Transverse colon (tissue), 4 donors: ENCODE measurements at regions of chr18 and their contacts with region 1.

Region 1: DNA sequence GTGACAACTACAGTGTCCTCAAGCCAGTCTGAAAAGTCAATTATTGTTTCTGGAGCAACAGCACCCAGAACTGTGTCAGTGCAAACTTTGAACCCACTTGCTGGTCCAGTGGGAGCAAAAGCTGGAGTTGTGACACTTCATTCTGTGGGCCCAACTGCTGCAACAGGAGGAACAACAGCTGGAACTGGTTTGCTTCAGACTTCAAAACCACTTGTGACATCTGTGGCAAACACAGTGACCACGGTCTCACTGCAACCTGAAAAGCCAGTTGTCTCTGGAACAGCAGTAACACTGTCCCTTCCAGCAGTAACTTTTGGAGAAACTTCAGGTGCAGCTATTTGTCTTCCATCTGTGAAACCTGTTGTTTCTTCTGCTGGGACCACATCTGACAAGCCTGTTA is 59.8 kb downstream of the TAF4B start:
- DNase-seq: no peak
- H3K4me3 ChIP-seq: no peak overlapping the region
- H3K27ac ChIP-seq: no peak overlapping the region
- H3K4me1 ChIP-seq: no peaks in the 10 kb centered on the region
- H3K27me3 ChIP-seq: no peaks in the 10 kb centered on the region
- CTCF ChIP-seq: no peak
- EP300 ChIP-seq: no peak
- POLR2A ChIP-seq: no peak

Region 2: GRCh38 chr18:26040051-26040656 is 245.9 kb before region 1 on chr18:
- in situ Hi-C with region 1: no loop called
- intact Hi-C with region 1: no loop called
- DNase-seq: no peak
- H3K4me3 ChIP-seq: no peak overlapping the region
- H3K27ac ChIP-seq: no peak overlapping the region
- H3K4me1 ChIP-seq: no peaks in the 10 kb centered on the region
- H3K27me3 ChIP-seq: no peaks in the 10 kb centered on the region
- CTCF ChIP-seq: no peak
- EP300 ChIP-seq: no peak
- POLR2A ChIP-seq: no peak

Region 3: DNA sequence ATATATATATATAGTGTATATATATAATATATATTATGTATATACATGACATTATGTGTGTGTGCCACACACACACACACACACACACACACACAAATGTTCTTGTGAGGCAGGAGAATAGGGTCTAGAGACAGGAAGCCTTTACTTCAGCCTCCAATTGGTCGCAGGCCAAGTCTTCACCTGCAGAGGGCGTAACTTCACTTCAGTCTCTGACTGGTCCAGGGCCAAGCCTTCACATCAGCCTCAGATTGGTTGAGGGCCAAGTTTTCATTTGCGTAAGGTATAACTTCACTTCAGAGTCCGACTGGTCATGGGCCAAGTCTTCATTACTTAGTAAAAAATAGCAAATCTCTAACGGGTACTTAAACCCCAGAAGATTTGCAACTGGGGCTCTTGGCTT is 182.4 kb before region 1 on chr18:
- in situ Hi-C with region 1: loop called in 1 of 4 experiments (anchors 25 kb)
- intact Hi-C with region 1: no loop called
- DNase-seq: peak; percentile 13
- H3K4me3 ChIP-seq: no peak overlapping the region
- H3K27ac ChIP-seq: no peak overlapping the region
- H3K4me1 ChIP-seq: no peaks in the 10 kb centered on the region
- H3K27me3 ChIP-seq: no peaks in the 10 kb centered on the region
- CTCF ChIP-seq: no peak
- EP300 ChIP-seq: no peak
- POLR2A ChIP-seq: no peak

Region 4: GRCh38 chr18:26190506-26190905 is 95.5 kb before region 1 on chr18:
- in situ Hi-C with region 1: no loop called
- intact Hi-C with region 1: no loop called
- DNase-seq: peak; percentile 43
- H3K4me3 ChIP-seq: no peak overlapping the region
- H3K27ac ChIP-seq: peak overlapping the region in 1 of 4 donors; percentile 18
- H3K4me1 ChIP-seq: no peaks in the 10 kb centered on the region
- H3K27me3 ChIP-seq: no peaks in the 10 kb centered on the region
- CTCF ChIP-seq: no peak
- EP300 ChIP-seq: no peak
- POLR2A ChIP-seq: no peak

Region 5: DNA sequence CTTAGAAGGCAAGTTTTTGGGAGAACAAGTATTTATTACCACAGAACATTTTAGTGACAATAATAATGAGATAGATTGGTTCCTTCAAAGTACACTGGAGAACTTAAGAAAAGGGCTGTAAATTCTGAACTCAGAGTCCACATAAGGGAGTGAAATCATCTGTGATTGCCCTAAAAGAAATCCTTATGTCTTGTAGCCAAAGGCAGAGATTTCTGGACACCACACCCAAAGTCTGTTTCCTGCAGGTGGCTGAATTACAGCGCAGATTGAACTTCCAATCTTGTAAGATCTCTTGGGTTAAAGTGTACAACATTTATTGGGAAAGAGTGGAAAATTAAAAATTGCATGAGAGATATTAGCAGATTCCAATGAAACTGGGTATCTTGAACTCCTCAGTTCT is 84.0 kb after region 1 on chr18:
- in situ Hi-C with region 1: no loop called
- intact Hi-C with region 1: no loop called
- DNase-seq: no peak
- H3K4me3 ChIP-seq: no peak overlapping the region
- H3K27ac ChIP-seq: no peak overlapping the region
- H3K4me1 ChIP-seq: no peaks in the 10 kb centered on the region
- H3K27me3 ChIP-seq: no peaks in the 10 kb centered on the region
- CTCF ChIP-seq: no peak
- EP300 ChIP-seq: no peak
- POLR2A ChIP-seq: no peak